Posterior vena cava (tissue), 2 donors: ENCODE measurements at regions of chr13 and their contacts with region 1.

Region 1: GRCh38 chr13:45297456-45298205 is 43.4 kb downstream of the TPT1 start:
- DNase-seq: no peak

Region 2: DNA sequence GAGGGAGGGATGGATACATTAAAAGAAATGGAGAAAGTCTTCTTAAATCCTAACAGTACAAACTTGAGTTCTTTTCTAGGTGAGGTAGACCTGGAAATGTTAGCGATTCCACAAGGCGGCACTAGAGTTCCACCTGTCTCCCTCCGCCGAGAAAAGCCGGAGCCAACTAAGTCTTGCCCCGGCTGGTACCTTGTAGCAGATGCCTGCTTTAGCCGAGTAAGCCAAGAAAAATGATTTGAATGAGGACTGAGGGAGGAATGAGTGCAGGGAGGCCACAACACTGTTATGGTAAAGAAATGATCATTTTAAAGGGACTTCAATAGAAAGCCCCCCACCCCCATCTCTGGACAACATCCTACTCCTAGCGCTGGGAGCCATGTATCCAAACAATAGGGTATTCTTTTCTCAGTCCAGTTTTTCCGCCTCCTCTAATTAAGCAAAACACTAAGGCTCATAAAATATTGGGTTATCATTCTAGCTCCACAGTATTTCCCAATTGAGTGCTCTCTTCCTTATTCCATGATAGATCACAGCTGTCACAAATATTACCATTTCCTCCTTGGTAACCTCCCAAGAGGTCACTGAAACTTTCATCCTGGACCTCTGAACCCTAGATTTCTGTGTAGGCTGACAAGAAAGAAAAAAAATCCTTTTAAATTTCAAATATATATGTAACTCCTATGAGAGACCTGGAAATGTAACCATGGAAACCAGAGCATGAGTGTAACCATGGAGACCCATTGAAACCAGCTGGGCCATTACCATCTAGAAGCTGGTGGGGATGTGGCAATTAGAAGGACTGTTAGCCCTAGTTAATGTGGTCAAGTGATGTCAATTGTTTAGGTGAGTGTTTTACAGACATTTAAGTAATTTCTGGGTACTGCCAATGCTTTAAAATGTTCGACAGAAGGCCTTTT is 250.0 kb before region 1 on chr13:
- intact Hi-C with region 1: loop called in 1 of 2 experiments (anchors 10 kb)
- DNase-seq: peak; percentile 86

Region 3: DNA sequence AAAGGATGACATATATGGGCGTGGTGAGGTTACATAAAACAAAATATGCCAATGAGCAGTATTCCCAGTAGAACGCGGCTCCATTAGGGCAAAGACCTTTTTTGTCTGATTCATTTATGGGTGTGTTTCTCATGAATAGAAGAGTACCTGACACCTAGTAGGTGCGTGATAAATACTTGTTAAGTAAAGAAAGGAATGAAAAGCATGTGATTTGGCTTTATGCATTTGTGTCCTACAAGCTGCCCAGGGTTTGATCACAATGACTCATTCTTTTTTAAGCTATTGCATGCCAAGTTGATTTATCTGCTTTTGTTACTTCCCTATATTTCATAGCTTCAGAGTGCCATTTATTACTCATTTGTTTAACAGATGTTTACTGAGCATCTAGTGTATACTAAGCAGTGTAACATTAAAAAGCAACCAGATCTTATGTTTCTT is 77.7 kb before region 1 on chr13:
- intact Hi-C with region 1: loop called in 1 of 2 experiments (anchors 10 kb)
- DNase-seq: no peak